CD8-positive, alpha-beta T cell (primary cell): ENCODE measurements at regions of chr5 and their contacts with region 1.

Region 1: GRCh38 chr5:154630410-154630809 is 124.8 kb upstream of the LARP1 start:
- DNase-seq: no peak
- ATAC-seq: no peak
- H3K4me3 ChIP-seq: no peak overlapping the region
- H3K4me3 Mint-ChIP-seq: no peak overlapping the region
- H3K27ac ChIP-seq: no peak overlapping the region
- H3K27ac Mint-ChIP-seq: no peak overlapping the region
- H3K4me1 ChIP-seq: no peaks in the 10 kb centered on the region
- H3K4me1 Mint-ChIP-seq: no peaks in the 10 kb centered on the region
- H3K27me3 ChIP-seq: no peaks in the 10 kb centered on the region
- H3K27me3 Mint-ChIP-seq: peaks cover 6% of the 10 kb centered on the region
- CTCF ChIP-seq: no peak

Region 2: GRCh38 chr5:153551537-153552079 is 1078.8 kb before region 1 on chr5:
- CTCF ChIA-PET with region 1: no interaction called
- POLR2A ChIA-PET with region 1: no interaction called
- intact Hi-C with region 1: no loop called
- DNase-seq: no peak
- ATAC-seq: no peak
- H3K4me3 ChIP-seq: no peak overlapping the region
- H3K4me3 Mint-ChIP-seq: no peak overlapping the region
- H3K27ac ChIP-seq: no peak overlapping the region
- H3K27ac Mint-ChIP-seq: no peak overlapping the region
- H3K4me1 ChIP-seq: no peaks in the 10 kb centered on the region
- H3K4me1 Mint-ChIP-seq: peaks cover 7% of the 10 kb centered on the region
- H3K27me3 ChIP-seq: no peaks in the 10 kb centered on the region
- H3K27me3 Mint-ChIP-seq: no peaks in the 10 kb centered on the region
- CTCF ChIP-seq: no peak

Region 3: GRCh38 chr5:154472871-154473580 is 157.4 kb before region 1 on chr5:
- CTCF ChIA-PET with region 1: no interaction called
- POLR2A ChIA-PET with region 1: no interaction called
- intact Hi-C with region 1: loop called in 1 of 2 experiments (anchors 5 kb)
- DNase-seq: no peak
- ATAC-seq: peak; percentile 38
- H3K4me3 ChIP-seq: no peak overlapping the region
- H3K4me3 Mint-ChIP-seq: peak overlapping the region; percentile 51
- H3K27ac ChIP-seq: no peak overlapping the region
- H3K27ac Mint-ChIP-seq: no peak overlapping the region
- H3K4me1 ChIP-seq: peaks cover 51% of the 10 kb centered on the region
- H3K4me1 Mint-ChIP-seq: peaks cover 53% of the 10 kb centered on the region
- H3K27me3 ChIP-seq: peaks cover 41 to 65% of the 10 kb centered on the region in 2 experiments
- H3K27me3 Mint-ChIP-seq: peaks cover 78% of the 10 kb centered on the region
- CTCF ChIP-seq: no peak